Mammary epithelial cell (primary cell): ENCODE measurements at regions of chr2 and their contacts with region 1.

Region 1: GRCh38 chr2:149597668-149598326 is 10.2 kb upstream of the MMADHC start:
- DNase-seq: peak; percentile 82
- H3K4me3 ChIP-seq: peak overlapping the region in 2 of 3 experiments; percentile 18 to 28
- H3K27ac ChIP-seq: peak overlapping the region; percentile 47
- H3K4me1 ChIP-seq: peaks cover 18% of the 10 kb centered on the region
- H3K27me3 ChIP-seq: no peaks in the 10 kb centered on the region
- CTCF ChIP-seq: peak; percentile 72 to 83

Region 2: GRCh38 chr2:149715005-149715592 is 117.3 kb after region 1 on chr2:
- CTCF ChIA-PET with region 1: no interaction called
- dilution Hi-C with region 1: no loop called
- in situ Hi-C with region 1: loop called (anchors 10 to 25 kb)
- intact Hi-C with region 1: loop called (anchors 1 kb)
- DNase-seq: peak; percentile 51
- H3K4me3 ChIP-seq: no peak overlapping the region
- H3K27ac ChIP-seq: no peak overlapping the region
- H3K4me1 ChIP-seq: no peaks in the 10 kb centered on the region
- H3K27me3 ChIP-seq: no peaks in the 10 kb centered on the region
- CTCF ChIP-seq: peak; percentile 58 to 80

Region 3: DNA sequence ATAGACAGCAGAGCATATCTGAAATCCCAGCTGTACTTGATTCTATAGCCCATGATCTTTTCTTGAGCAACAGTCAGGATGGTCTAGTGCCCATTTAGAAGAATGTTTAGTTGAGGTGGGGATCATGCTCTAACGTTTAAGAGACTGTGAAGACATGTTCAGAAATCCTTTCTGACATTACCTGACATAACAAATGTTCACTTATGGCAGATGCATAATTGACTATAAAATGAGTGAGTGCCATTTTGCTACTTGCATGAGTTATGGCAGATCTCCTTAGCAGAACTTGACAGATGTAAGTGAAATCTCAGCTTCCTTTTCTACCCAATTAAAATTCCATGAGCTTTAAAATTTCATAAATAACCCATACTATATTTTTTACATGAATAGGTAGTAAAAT is 199.2 kb after region 1 on chr2:
- CTCF ChIA-PET with region 1: no interaction called
- dilution Hi-C with region 1: no loop called
- in situ Hi-C with region 1: no loop called
- intact Hi-C with region 1: no loop called
- DNase-seq: no peak
- H3K4me3 ChIP-seq: no peak overlapping the region
- H3K27ac ChIP-seq: no peak overlapping the region
- H3K4me1 ChIP-seq: no peaks in the 10 kb centered on the region
- H3K27me3 ChIP-seq: no peaks in the 10 kb centered on the region
- CTCF ChIP-seq: no peak

Region 4: GRCh38 chr2:149994057-149994753 is 396.4 kb after region 1 on chr2:
- CTCF ChIA-PET with region 1: no interaction called
- dilution Hi-C with region 1: no loop called
- in situ Hi-C with region 1: no loop called
- intact Hi-C with region 1: loop called (anchors 2 kb)
- DNase-seq: peak; percentile 100
- H3K4me3 ChIP-seq: no peak overlapping the region
- H3K27ac ChIP-seq: peak overlapping the region; percentile 74
- H3K4me1 ChIP-seq: peaks cover 29% of the 10 kb centered on the region
- H3K27me3 ChIP-seq: no peaks in the 10 kb centered on the region
- CTCF ChIP-seq: no peak

Region 5: GRCh38 chr2:150327564-150328489 is 730.0 kb after region 1 on chr2:
- CTCF ChIA-PET with region 1: no interaction called
- dilution Hi-C with region 1: no loop called
- in situ Hi-C with region 1: no loop called
- intact Hi-C with region 1: no loop called
- DNase-seq: no peak
- H3K4me3 ChIP-seq: no peak overlapping the region
- H3K27ac ChIP-seq: no peak overlapping the region
- H3K4me1 ChIP-seq: no peaks in the 10 kb centered on the region
- H3K27me3 ChIP-seq: no peaks in the 10 kb centered on the region
- CTCF ChIP-seq: no peak

Region 6: GRCh38 chr2:150472511-150472899 is 874.7 kb after region 1 on chr2:
- CTCF ChIA-PET with region 1: no interaction called
- dilution Hi-C with region 1: no loop called
- in situ Hi-C with region 1: loop called in 1 of 2 experiments (anchors 5 kb)
- intact Hi-C with region 1: no loop called
- DNase-seq: no peak
- H3K4me3 ChIP-seq: no peak overlapping the region
- H3K27ac ChIP-seq: peak overlapping the region; percentile 36
- H3K4me1 ChIP-seq: peaks cover 55% of the 10 kb centered on the region
- H3K27me3 ChIP-seq: no peaks in the 10 kb centered on the region
- CTCF ChIP-seq: no peak

Region 7: DNA sequence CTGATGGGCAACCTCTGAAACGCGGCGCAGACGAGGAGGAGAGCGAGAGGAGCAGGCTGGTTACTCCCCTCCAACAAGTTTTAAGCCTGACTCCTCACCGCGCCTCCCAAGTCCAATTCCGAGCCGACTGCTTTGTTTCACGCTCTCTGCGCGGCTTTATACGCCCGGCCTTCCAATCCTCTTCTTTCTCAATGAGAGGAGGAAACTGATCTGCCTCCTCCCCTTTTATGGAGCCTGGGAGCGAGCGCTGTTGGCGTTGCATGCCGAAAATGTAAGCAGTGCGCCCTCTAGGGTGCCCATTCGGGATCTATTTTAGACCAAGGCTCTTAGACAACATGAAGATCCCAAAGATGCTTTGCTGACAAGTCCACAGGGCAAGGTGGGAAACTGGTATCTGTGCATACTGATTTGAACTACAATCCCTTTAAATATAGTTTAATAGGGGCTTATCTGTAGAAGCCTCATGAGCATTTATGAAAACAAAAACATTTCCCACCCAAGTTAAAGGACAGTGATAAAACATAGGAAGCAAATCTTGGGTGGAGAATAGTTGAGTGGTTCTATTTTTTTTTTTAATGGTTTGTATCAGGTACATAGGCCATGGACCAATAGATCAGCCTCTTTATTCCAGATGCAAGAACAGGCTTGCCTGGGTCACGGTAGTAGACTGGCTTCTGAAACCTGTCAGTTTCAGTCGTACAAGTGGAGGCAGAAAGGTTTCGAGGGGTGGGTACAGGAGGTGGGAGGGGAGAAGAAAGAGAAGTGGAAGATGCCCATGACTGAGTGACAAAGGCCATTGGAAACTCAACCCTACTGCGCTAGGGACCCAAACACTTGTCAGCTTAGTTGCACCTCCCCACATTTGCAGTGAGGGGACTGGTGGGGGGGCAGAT is 890.0 kb after region 1 on chr2 and contains the start of gene RND3:
- CTCF ChIA-PET with region 1: interaction called, 4 read pairs
- dilution Hi-C with region 1: no loop called
- in situ Hi-C with region 1: no loop called
- intact Hi-C with region 1: loop called (anchors 2 kb)
- DNase-seq: peak; percentile 98
- H3K4me3 ChIP-seq: peak within 1 kb of the TSS; percentile 85 to 96 (median 93)
- H3K27ac ChIP-seq: peak within 1 kb of the TSS; percentile 99
- H3K4me1 ChIP-seq: peaks cover 14% of the 10 kb centered on the region
- H3K27me3 ChIP-seq: no peaks in the 10 kb centered on the region
- CTCF ChIP-seq: peak; percentile 86 to 90
- total RNA-seq, gene RND3: 146 to 178 TPM

Region 8: DNA sequence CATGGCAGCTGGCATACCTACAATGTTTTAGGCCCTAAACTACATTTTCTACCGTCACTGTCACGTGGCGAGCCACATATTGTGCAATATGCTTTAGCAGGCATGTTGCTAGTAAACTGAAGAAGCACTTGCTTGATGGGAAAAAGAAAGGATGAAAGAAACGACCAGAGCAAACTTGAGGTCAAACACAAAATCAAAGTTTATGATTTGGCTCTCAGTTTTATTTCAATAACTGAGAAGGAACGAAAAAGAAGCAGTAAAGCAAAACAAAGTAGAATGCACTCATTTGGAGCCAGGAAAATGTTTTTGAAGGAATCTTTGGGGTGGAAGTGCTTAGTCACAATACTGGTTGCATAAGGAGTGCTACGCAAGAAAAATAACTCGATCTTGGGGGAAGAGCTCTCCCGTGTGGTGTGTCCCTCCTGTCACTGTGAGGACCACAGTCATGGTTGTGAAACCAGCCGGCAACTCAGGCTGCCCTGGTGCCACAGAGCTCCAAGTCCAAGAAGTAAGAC is 1314.0 kb after region 1 on chr2:
- CTCF ChIA-PET with region 1: no interaction called
- dilution Hi-C with region 1: no loop called
- in situ Hi-C with region 1: no loop called
- intact Hi-C with region 1: loop called (anchors 10 kb)
- DNase-seq: peak; percentile 70
- H3K4me3 ChIP-seq: no peak overlapping the region
- H3K27ac ChIP-seq: peak overlapping the region; percentile 30
- H3K4me1 ChIP-seq: peaks cover 19% of the 10 kb centered on the region
- H3K27me3 ChIP-seq: no peaks in the 10 kb centered on the region
- CTCF ChIP-seq: peak in 1 of 2 donors; percentile 36

Region 9: DNA sequence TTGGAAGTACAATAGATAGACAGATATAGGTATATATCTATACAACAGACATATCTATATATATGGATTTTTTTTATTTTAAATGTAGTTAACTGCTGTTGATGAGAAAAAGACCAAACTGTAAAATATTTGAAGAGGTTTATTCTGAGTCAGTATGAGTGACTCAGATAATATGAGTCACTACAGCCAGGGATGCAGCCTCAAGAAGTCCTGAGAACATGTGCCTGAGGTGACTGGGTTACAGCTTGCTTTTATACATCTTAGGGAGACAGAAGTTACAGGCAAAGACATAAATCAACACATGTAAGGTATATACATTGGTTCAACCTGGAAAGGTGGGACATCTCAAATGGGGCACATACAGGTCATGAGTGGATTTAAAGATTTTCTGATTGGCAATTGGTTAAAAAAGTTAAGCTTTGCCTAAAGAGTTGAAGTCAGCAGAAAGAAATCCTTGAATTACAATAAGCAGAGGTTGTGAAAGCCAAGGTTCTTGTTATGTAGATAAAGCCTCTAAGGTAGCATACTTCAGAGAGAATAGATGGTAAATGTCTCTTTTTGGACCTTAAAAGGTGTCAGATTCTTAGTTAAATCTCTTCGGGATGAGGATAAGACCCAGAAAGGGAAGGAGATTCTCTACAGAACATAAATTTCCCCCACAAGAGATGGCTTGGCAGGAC is 1513.9 kb after region 1 on chr2:
- CTCF ChIA-PET with region 1: no interaction called
- dilution Hi-C with region 1: no loop called
- in situ Hi-C with region 1: no loop called
- intact Hi-C with region 1: no loop called
- DNase-seq: peak; percentile 73
- H3K4me3 ChIP-seq: no peak overlapping the region
- H3K27ac ChIP-seq: no peak overlapping the region
- H3K4me1 ChIP-seq: peaks cover 5% of the 10 kb centered on the region
- H3K27me3 ChIP-seq: no peaks in the 10 kb centered on the region
- CTCF ChIP-seq: no peak

Region 10: DNA sequence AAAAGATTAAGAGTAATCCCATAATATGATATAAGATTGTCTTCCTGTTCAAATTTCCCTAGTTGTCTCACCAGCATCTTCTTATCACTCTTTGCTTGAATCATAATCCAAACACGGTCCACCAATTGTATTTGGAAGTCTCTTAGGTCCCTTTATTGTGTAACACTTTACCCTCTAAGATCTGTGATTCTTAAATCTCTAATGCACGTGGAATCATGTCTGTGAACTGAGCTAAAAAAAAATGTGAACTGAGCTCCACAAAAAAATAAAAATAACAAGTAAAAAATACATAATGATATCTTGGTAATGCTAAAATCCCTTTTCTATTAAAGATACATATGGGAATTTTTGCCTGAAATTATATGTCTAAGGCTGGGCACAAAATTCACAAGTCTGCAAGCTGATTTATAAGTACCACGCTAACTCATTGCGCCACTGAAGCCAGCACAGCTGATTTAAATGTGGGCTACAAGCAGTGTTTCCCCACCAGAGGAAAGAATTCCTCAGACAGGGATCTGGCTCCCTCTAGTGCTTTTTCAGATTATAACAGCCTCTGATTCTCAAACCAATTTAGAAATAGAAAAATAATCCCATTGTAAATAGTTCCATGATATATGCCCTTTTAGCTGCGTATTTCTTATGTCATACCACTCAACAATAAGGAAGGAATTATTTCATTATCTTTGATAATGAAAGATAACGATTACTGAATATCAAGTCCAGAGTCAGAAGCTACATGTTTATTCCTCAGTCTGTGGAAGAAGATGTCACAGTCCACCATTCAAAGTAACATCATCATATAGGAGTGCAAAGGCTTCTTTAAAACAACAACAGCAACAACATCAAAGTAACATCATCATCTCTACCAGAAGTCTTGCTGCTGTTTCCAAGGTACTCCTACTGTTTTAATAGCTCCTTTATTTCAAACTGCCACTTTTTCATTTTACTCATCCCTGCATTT is 1641.0 kb after region 1 on chr2:
- CTCF ChIA-PET with region 1: interaction called, 4 read pairs
- dilution Hi-C with region 1: no loop called
- in situ Hi-C with region 1: loop called (anchors 5 to 10 kb)
- intact Hi-C with region 1: loop called (anchors 2 kb)
- DNase-seq: peak; percentile 51
- H3K4me3 ChIP-seq: no peak overlapping the region
- H3K27ac ChIP-seq: no peak overlapping the region
- H3K4me1 ChIP-seq: peaks cover 7% of the 10 kb centered on the region
- H3K27me3 ChIP-seq: no peaks in the 10 kb centered on the region
- CTCF ChIP-seq: peak; percentile 75 to 79